CD4-positive, alpha-beta T cell (primary cell): ENCODE measurements at regions of chr3 and their contacts with region 1.

Region 1: GRCh38 chr3:10164546-10165393 is at the start of gene IRAK2:
- DNase-seq: peak in 13 of 14 experiments; percentile 33 to 84 (median 48)
- ATAC-seq: peak; percentile 80
- H3K4me3 ChIP-seq: peak within 1 kb of the TSS; percentile 72
- H3K4me3 Mint-ChIP-seq: peak within 1 kb of the TSS; percentile 88
- H3K27ac ChIP-seq: peak within 1 kb of the TSS in 1 of 2 donors; percentile 50
- H3K27ac Mint-ChIP-seq: peak within 1 kb of the TSS; percentile 12
- H3K4me1 ChIP-seq: peaks cover 23% of the 10 kb centered on the region
- H3K4me1 Mint-ChIP-seq: peaks cover 28% of the 10 kb centered on the region
- H3K27me3 ChIP-seq: no peaks in the 10 kb centered on the region
- H3K27me3 Mint-ChIP-seq: no peaks in the 10 kb centered on the region
- CTCF ChIP-seq: peak; percentile 95
- total RNA-seq, gene IRAK2: 1.4 to 1.6 TPM

Region 2: GRCh38 chr3:10142707-10143566 is 21.8 kb before region 1 on chr3:
- CTCF ChIA-PET with region 1: no interaction called
- POLR2A ChIA-PET with region 1: interaction called, 5 read pairs
- intact Hi-C with region 1: loop called in 1 of 2 experiments (anchors 2 kb)
- DNase-seq: peak in 5 of 14 experiments; percentile 1 to 54 (median 42)
- ATAC-seq: no peak
- H3K4me3 ChIP-seq: peak overlapping the region; percentile 85
- H3K4me3 Mint-ChIP-seq: peak overlapping the region; percentile 90
- H3K27ac ChIP-seq: peak overlapping the region in 1 of 2 donors; percentile 22
- H3K27ac Mint-ChIP-seq: peak overlapping the region; percentile 85
- H3K4me1 ChIP-seq: peaks cover 54% of the 10 kb centered on the region
- H3K4me1 Mint-ChIP-seq: peaks cover 40% of the 10 kb centered on the region
- H3K27me3 ChIP-seq: no peaks in the 10 kb centered on the region
- H3K27me3 Mint-ChIP-seq: no peaks in the 10 kb centered on the region
- CTCF ChIP-seq: no peak

Region 3: GRCh38 chr3:10192953-10193691 is 28.4 kb after region 1 on chr3:
- CTCF ChIA-PET with region 1: interaction called, 7 read pairs
- POLR2A ChIA-PET with region 1: interaction called, 15 read pairs
- intact Hi-C with region 1: loop called in 1 of 2 experiments (anchors 2 kb)
- DNase-seq: peak in 13 of 14 experiments; percentile 33 to 83 (median 62)
- ATAC-seq: peak; percentile 51
- H3K4me3 ChIP-seq: peak overlapping the region; percentile 7
- H3K4me3 Mint-ChIP-seq: peak overlapping the region; percentile 86
- H3K27ac ChIP-seq: peak overlapping the region; percentile 89 to 90
- H3K27ac Mint-ChIP-seq: peak overlapping the region; percentile 96
- H3K4me1 ChIP-seq: peaks cover 96% of the 10 kb centered on the region
- H3K4me1 Mint-ChIP-seq: peaks cover 81% of the 10 kb centered on the region
- H3K27me3 ChIP-seq: no peaks in the 10 kb centered on the region
- H3K27me3 Mint-ChIP-seq: no peaks in the 10 kb centered on the region
- CTCF ChIP-seq: no peak

Region 4: GRCh38 chr3:10198761-10199649 is 34.2 kb after region 1 on chr3:
- CTCF ChIA-PET with region 1: interaction called, 3 read pairs
- POLR2A ChIA-PET with region 1: interaction called, 15 read pairs
- intact Hi-C with region 1: loop called (anchors 2 to 5 kb)
- DNase-seq: peak; percentile 50 to 94 (median 64)
- ATAC-seq: peak; percentile 81
- H3K4me3 ChIP-seq: no peak overlapping the region
- H3K4me3 Mint-ChIP-seq: peak overlapping the region; percentile 75
- H3K27ac ChIP-seq: peak overlapping the region; percentile 86 to 95
- H3K27ac Mint-ChIP-seq: peak overlapping the region; percentile 93
- H3K4me1 ChIP-seq: peaks cover 83% of the 10 kb centered on the region
- H3K4me1 Mint-ChIP-seq: peaks cover 71% of the 10 kb centered on the region
- H3K27me3 ChIP-seq: no peaks in the 10 kb centered on the region
- H3K27me3 Mint-ChIP-seq: no peaks in the 10 kb centered on the region
- CTCF ChIP-seq: no peak

Region 5: DNA sequence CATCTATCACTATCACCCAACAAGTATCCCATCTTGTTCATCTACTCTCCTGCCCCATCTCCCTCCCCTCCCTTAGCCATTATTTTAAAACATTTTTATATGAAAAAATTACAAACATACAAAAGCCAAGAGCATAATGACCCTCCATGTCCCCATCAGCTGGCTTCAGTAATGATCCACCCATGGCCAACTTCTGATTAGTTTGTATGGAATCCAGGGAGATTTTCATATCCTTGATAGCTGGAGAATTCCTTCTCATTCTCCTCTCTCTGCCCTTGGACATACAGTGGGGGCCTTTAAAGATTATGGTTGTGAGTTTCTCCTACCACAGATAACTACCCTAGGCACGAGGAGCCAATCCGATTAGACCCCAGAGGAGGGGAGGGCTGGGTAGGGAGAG is 40.2 kb after region 1 on chr3:
- CTCF ChIA-PET with region 1: no interaction called
- POLR2A ChIA-PET with region 1: no interaction called
- intact Hi-C with region 1: loop called in 1 of 2 experiments (anchors 5 kb)
- DNase-seq: no peak
- ATAC-seq: no peak
- H3K4me3 ChIP-seq: no peak overlapping the region
- H3K4me3 Mint-ChIP-seq: no peak overlapping the region
- H3K27ac ChIP-seq: no peak overlapping the region
- H3K27ac Mint-ChIP-seq: no peak overlapping the region
- H3K4me1 ChIP-seq: peaks cover 24% of the 10 kb centered on the region
- H3K4me1 Mint-ChIP-seq: peaks cover 25% of the 10 kb centered on the region
- H3K27me3 ChIP-seq: no peaks in the 10 kb centered on the region
- H3K27me3 Mint-ChIP-seq: no peaks in the 10 kb centered on the region
- CTCF ChIP-seq: no peak

Region 6: GRCh38 chr3:10242182-10243065 is 77.7 kb after region 1 on chr3:
- CTCF ChIA-PET with region 1: no interaction called
- POLR2A ChIA-PET with region 1: interaction called, 3 read pairs
- intact Hi-C with region 1: loop called in 1 of 2 experiments (anchors 5 kb)
- DNase-seq: peak; percentile 42 to 94 (median 68)
- ATAC-seq: peak; percentile 94
- H3K4me3 ChIP-seq: peak overlapping the region; percentile 6
- H3K4me3 Mint-ChIP-seq: peak overlapping the region; percentile 77
- H3K27ac ChIP-seq: peak overlapping the region; percentile 41 to 63
- H3K27ac Mint-ChIP-seq: peak overlapping the region; percentile 91
- H3K4me1 ChIP-seq: peaks cover 59% of the 10 kb centered on the region
- H3K4me1 Mint-ChIP-seq: peaks cover 62% of the 10 kb centered on the region
- H3K27me3 ChIP-seq: no peaks in the 10 kb centered on the region
- H3K27me3 Mint-ChIP-seq: no peaks in the 10 kb centered on the region
- CTCF ChIP-seq: no peak